A673 (cell line): ENCODE measurements at regions of chr20 and their contacts with region 1.

Region 1: DNA sequence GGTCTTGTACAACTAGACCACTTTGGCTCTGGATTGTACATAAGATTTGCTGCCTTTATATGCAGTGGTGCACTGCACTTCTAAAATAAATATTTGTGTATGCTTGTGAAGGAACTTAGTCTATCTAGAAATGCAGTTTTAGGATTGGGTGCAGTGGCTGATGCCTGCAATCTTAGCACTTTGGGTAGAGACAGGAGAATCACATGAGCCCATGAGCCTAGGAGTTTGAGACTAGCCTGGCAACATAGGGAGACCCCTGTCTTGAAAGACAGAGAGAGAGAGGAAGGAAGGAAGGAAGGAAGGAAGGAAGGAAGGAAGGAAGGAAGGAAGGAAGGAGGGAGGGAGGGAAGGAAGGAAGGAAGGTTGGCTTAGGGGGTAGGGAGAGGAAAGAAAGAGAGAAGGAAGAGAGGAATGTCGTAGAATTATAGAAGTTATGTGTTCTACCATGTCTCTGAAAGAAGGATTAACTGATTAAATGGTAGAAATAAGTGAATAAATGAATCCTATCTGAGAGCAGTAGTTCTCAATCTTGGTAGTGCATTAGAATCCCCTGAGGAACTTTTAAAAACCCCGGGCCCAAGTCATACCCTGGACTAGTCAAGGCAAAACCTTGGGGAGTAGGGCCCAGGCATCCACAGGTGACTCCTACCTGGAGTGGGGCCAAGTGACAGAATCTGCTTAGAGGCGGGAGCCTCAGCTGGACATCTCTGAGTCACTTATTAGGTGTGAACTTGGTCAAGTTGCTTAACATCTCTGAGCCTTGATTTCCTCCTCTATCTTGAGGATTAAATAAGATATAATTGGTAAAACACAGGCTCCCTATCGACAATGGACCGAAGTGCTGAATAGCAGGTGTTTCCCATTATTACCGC is 130.3 kb downstream of the ZNF217 start:
- DNase-seq: peak; percentile 77
- H3K4me3 ChIP-seq: no peak overlapping the region
- H3K27ac ChIP-seq: peak overlapping the region; percentile 74
- H3K4me1 ChIP-seq: peaks cover 13% of the 10 kb centered on the region
- H3K27me3 ChIP-seq: no peaks in the 10 kb centered on the region
- CTCF ChIP-seq: no peak

Region 2: DNA sequence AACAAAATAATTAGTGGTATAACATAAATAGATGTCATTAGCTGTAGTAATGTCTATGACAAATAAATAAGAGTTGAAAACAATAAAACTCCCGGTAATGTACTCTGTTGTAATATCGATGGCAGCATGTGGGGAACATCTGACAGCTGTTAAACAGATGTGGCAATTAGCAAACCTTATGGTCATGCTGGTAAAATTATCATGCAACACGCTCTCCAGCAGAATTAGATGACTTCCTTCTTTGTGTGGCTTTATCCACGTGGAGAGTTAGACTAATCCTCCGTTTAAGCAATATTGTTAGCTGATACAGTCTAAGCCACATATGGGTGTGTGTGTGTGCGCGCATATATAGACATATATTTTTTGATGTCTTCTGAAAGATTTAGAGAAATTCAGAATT is 1194.0 kb before region 1 on chr20:
- CTCF ChIA-PET with region 1: no interaction called
- POLR2A ChIA-PET with region 1: no interaction called
- intact Hi-C with region 1: loop called (anchors 2 kb)
- DNase-seq: peak; percentile 93
- H3K4me3 ChIP-seq: no peak overlapping the region
- H3K27ac ChIP-seq: peak overlapping the region; percentile 81
- H3K4me1 ChIP-seq: peaks cover 61% of the 10 kb centered on the region
- H3K27me3 ChIP-seq: no peaks in the 10 kb centered on the region
- CTCF ChIP-seq: no peak

Region 3: GRCh38 chr20:52572687-52573086 is 890.6 kb before region 1 on chr20:
- CTCF ChIA-PET with region 1: no interaction called
- POLR2A ChIA-PET with region 1: no interaction called
- intact Hi-C with region 1: loop called (anchors 2 kb)
- DNase-seq: peak; percentile 42
- H3K4me3 ChIP-seq: no peak overlapping the region
- H3K27ac ChIP-seq: no peak overlapping the region
- H3K4me1 ChIP-seq: peaks cover 13% of the 10 kb centered on the region
- H3K27me3 ChIP-seq: no peaks in the 10 kb centered on the region
- CTCF ChIP-seq: no peak

Region 4: DNA sequence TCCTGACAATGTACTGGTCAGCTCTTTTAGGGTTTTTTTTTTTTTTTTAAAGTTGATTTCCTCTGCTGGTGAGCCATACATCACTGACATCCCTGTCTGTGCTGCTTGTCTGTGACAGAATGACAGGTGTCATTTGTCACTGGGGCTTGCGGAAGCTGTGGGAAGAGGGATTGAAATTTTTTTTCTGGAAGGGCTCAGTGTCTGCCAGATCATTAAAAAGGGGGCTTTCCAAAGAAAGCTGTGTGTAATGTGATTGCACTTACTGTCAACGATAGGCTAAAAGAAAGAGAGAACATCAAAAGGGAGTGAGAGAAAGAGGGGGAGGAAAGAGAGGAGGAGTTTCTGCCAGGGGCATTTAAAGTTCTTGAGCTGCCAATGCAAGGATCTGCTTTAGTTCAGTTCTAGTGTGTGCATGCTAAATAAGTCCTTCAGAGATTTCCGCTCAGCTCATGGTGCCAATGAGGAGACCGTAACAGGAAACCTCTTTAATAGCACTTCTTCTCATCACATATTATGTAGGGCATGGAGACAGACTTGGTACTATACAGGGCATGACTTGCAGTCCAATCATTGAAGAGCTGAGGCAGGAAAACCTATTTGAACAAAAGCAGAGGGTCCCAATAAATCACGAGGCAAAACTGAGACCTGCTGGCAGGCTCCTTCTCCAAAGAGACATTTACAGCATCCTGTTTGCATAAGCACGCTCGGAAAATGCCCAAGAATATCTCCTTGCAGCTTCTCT is 314.0 kb before region 1 on chr20:
- CTCF ChIA-PET with region 1: no interaction called
- POLR2A ChIA-PET with region 1: no interaction called
- intact Hi-C with region 1: loop called (anchors 1 kb)
- DNase-seq: peak; percentile 97
- H3K4me3 ChIP-seq: peak overlapping the region; percentile 18
- H3K27ac ChIP-seq: peak overlapping the region; percentile 79
- H3K4me1 ChIP-seq: peaks cover 42% of the 10 kb centered on the region
- H3K27me3 ChIP-seq: no peaks in the 10 kb centered on the region
- CTCF ChIP-seq: no peak

Region 5: GRCh38 chr20:53291548-53291947 is 171.8 kb before region 1 on chr20:
- CTCF ChIA-PET with region 1: no interaction called
- POLR2A ChIA-PET with region 1: no interaction called
- intact Hi-C with region 1: no loop called
- DNase-seq: peak; percentile 17
- H3K4me3 ChIP-seq: no peak overlapping the region
- H3K27ac ChIP-seq: no peak overlapping the region
- H3K4me1 ChIP-seq: no peaks in the 10 kb centered on the region
- H3K27me3 ChIP-seq: no peaks in the 10 kb centered on the region
- CTCF ChIP-seq: peak; percentile 66

Region 6: GRCh38 chr20:53335555-53335954 is 127.8 kb before region 1 on chr20:
- CTCF ChIA-PET with region 1: no interaction called
- POLR2A ChIA-PET with region 1: no interaction called
- intact Hi-C with region 1: no loop called
- DNase-seq: no peak
- H3K4me3 ChIP-seq: no peak overlapping the region
- H3K27ac ChIP-seq: no peak overlapping the region
- H3K4me1 ChIP-seq: peaks cover 14% of the 10 kb centered on the region
- H3K27me3 ChIP-seq: no peaks in the 10 kb centered on the region
- CTCF ChIP-seq: no peak

Region 7: DNA sequence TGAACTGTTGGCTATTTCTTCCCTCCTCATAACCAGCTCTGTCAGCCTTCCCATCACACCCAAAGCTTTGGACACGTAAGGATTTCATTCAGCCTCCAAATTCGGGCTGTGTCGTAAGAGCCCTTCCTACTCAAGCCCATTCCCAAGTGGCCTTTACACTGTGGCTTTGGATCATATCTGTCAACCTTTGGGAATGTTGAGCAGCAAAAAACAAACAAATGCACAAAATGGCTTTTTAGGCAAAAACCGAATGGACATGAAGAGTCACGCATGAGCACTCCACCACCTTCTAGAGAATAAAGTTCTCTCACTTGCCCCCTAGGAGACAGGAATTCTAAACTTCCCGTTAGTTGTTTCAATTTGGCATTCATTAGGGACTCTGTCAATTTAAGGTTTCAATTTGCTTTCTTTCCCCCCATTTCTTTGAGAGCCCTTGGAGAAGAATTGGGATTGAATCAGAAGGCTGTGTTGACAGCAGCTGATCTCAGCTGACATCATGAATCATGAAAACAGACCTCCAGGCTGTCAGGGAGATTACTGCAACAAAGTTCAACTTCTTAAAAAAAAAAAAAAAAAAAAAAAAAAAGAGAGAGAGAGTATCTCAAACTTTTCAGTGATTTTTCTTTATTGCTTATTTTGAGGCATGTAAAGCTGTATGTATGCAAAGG is 496.7 kb after region 1 on chr20:
- CTCF ChIA-PET with region 1: no interaction called
- POLR2A ChIA-PET with region 1: no interaction called
- intact Hi-C with region 1: loop called (anchors 2 kb)
- DNase-seq: no peak
- H3K4me3 ChIP-seq: peak overlapping the region; percentile 21
- H3K27ac ChIP-seq: peak overlapping the region; percentile 97
- H3K4me1 ChIP-seq: peaks cover 60% of the 10 kb centered on the region
- H3K27me3 ChIP-seq: no peaks in the 10 kb centered on the region
- CTCF ChIP-seq: no peak